WTC11 (cell line): ENCODE measurements at regions of chr1 and their contacts with region 1.

Region 1: GRCh38 chr1:20194757-20195461 is 8.6 kb upstream of the PLA2G2C start:
- DNase-seq: peak; percentile 78
- ATAC-seq: peak; percentile 87
- H3K4me3 Mint-ChIP-seq: no peak overlapping the region
- H3K27ac Mint-ChIP-seq: no peak overlapping the region
- H3K4me1 Mint-ChIP-seq: peaks cover 24% of the 10 kb centered on the region
- H3K27me3 Mint-ChIP-seq: peaks cover 13% of the 10 kb centered on the region
- CTCF ChIP-seq: peak; percentile 81

Region 2: GRCh38 chr1:20165522-20165951 is 29.4 kb before region 1 on chr1:
- CTCF ChIA-PET with region 1: interaction called, 10 read pairs
- POLR2A ChIA-PET with region 1: no interaction called
- DNase-seq: peak; percentile 36
- ATAC-seq: peak; percentile 69
- H3K4me3 Mint-ChIP-seq: no peak overlapping the region
- H3K27ac Mint-ChIP-seq: no peak overlapping the region
- H3K4me1 Mint-ChIP-seq: peaks cover 20% of the 10 kb centered on the region
- H3K27me3 Mint-ChIP-seq: peaks cover 6% of the 10 kb centered on the region
- CTCF ChIP-seq: peak; percentile 34; the same call in 1 of the 2 replicates

Region 3: DNA sequence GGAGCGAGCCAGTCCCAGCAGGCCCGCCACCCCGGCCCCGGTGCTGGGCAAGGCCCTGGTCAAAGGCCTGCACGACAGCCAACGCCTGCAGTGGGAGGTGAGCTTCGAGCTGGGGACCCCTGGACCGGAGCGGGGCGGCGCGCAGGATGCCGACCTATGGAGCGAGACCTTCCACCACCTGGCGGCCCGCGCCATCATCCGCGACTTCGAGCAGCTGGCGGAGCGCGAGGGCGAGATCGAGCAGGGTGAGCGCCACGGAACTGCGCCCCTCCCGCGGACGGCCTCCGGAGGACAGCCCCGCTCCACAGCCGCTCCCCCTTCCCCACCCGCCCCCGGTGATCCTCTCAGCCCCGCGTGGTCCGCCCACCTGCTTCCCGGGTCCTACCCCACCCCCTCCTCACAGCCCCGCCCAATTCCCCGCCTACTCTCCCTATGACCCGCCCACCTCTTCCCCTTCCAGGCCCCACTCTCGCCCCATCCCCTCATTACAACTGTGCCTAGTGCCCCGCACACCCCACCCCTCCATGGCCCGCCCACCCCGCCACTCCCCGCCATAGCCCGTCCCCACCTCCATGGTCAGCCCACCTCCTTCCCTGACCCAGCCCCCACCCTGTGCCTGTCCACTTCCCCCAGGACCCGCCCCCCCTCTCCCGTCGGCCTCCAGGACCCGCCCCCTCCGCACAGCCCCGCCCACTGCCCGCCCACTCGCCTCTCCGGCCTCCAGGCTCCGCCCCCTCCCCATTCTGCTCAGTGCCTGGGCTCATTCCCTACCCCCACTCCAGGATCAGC is 148.4 kb after region 1 on chr1:
- CTCF ChIA-PET with region 1: no interaction called
- POLR2A ChIA-PET with region 1: no interaction called
- DNase-seq: peak; percentile 89
- ATAC-seq: peak; percentile 75
- H3K4me3 Mint-ChIP-seq: peak overlapping the region; percentile 67
- H3K27ac Mint-ChIP-seq: no peak overlapping the region
- H3K4me1 Mint-ChIP-seq: peaks cover 29% of the 10 kb centered on the region
- H3K27me3 Mint-ChIP-seq: peaks cover 25% of the 10 kb centered on the region
- CTCF ChIP-seq: no peak